ENCODE measurements at regions of chr6 and their contacts with region 1.

Region 1: GRCh38 chr6:153023977-153024708 is 21.6 kb upstream of the MTRF1L start:
- DNase-seq: peak; percentile 22
- H3K4me3 ChIP-seq: no peak overlapping the region
- H3K27ac ChIP-seq: no peak overlapping the region
- H3K4me1 ChIP-seq: no peaks in the 10 kb centered on the region
- H3K27me3 ChIP-seq: no peaks in the 10 kb centered on the region
- CTCF ChIP-seq: peak; percentile 62 to 77 (median 75)
- EP300 ChIP-seq: no peak
- POLR2A ChIP-seq: no peak

Region 2: DNA sequence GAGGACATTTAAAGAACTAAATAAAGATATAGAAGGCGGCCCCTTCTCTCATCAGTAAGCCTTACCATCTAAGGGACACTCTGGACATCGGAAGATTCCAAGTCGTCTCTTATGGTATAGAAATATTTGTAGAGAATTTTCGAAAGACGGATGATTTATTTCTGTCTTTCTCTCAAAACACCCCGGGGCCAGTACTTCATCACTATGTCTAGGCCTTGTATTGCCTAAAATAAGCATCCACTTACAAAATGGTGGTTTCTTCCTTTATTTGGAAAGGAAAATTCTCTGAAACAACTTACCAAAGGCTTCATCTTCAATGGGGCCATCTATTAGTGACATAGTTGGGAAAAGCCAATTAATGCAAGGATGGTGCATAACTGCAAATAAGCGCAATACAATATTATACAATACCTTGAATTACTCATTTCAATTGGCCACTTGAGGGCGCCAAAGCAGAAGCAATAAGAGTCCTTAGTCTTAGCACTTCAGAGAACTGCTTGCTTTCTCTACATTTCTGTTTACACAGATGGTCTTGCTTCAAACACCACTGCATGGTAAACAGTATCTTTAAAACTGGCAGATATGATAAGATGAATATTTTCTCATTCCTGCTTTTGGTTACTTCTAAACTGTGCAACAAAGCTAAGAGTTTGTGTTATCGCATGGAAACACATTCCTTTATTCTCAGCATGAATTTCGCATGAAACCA is 160.4 kb before region 1 on chr6:
- in situ Hi-C with region 1: loop called in 1 of 4 experiments (anchors 10 kb)
- intact Hi-C with region 1: loop called (anchors 5 kb)
- DNase-seq: peak; percentile 60
- H3K4me3 ChIP-seq: no peak overlapping the region
- H3K27ac ChIP-seq: no peak overlapping the region
- H3K4me1 ChIP-seq: no peaks in the 10 kb centered on the region
- H3K27me3 ChIP-seq: no peaks in the 10 kb centered on the region
- CTCF ChIP-seq: peak; percentile 47 to 58 (median 49)
- EP300 ChIP-seq: no peak
- POLR2A ChIP-seq: no peak

Region 3: DNA sequence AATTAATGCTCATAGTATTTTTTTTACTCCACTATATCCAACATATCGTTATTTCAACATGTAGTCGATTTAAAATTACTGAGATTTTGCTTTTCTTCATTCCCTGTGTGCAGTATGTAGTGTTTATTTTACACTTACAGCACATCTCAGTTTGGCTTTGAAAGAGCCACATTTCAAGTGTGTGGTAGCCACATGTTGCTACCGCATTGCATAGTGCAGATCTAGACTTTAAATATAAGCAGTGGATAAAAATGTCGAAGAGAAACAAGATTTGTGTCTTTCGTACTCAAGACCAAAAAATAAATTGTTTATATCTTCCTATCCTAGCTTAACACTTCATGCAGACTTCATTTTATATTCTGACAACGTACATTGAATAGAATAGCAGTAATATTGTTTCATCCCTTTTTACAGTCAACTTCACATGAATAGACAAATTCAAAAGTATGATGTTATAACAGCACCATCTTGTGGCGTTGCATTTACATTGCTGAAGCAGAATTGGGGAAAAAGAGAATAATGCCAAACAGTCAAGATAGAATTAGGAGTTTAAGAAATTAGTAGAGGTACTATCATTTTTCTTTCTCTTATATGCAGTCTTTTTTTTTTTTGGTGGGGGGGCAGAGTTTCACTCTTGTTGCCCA is 71.2 kb before region 1 on chr6:
- in situ Hi-C with region 1: loop called in 1 of 4 experiments (anchors 10 kb)
- intact Hi-C with region 1: no loop called
- DNase-seq: no peak
- H3K4me3 ChIP-seq: no peak overlapping the region
- H3K27ac ChIP-seq: no peak overlapping the region
- H3K4me1 ChIP-seq: peaks cover 0 to 5% (median 0%) of the 10 kb centered on the region in 4 donors
- H3K27me3 ChIP-seq: peaks cover 17% of the 10 kb centered on the region
- CTCF ChIP-seq: peak; percentile 19 to 34 (median 30)
- EP300 ChIP-seq: no peak
- POLR2A ChIP-seq: no peak

Measured in transverse colon (tissue), 4 donors.